MCF 10A (cell line): ENCODE measurements at regions of chr2 and their contacts with region 1.

Region 1: GRCh38 chr2:218852911-218853667 is 6.5 kb upstream of the WNT6 start:
- DNase-seq: peak; percentile 67
- H3K4me3 Mint-ChIP-seq: no peak overlapping the region
- H3K27ac Mint-ChIP-seq: no peak overlapping the region
- H3K4me1 Mint-ChIP-seq: peaks cover 23% of the 10 kb centered on the region
- H3K27me3 Mint-ChIP-seq: peaks cover 5% of the 10 kb centered on the region
- CTCF ChIP-seq: peak; percentile 89

Region 2: DNA sequence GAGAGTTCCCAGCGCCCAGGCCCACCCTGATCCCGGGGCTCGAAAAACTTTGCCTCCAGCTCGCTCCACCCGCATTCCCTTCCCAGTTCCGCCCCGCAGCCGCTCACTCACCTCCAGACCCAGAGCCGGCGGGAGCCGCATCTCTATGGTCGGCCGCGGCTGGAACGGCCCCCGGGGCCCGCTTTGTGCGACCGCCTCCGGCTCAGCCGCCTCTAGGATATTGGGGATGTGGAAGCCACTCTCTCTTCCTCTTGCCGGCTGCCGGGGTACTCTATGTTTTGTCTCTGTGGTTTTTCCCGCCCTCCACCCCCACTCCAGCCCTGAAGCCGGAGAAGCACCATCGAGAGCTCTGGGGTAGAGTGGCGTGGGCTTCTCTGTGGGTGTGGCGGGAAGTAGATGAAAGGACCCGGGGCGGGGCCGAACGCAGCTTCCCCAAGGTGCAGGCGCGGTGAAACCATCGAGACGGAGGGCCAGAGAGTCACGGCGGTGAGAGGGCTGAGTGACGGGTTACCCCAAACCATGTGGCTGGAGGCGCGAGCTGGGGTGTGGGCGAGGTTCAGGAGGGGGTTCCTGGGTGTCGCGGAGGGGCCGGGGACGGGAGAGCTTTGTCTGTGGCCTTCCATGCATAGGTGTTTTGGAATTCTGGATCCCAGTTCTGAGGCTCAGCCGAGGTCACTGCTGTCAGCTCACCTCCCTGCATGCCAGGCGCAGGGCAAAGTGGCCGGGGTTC is 193.7 kb before region 1 on chr2 and contains the starts of genes BCS1L and ZNF142:
- CTCF ChIA-PET with region 1: interaction called, 26 read pairs
- POLR2A ChIA-PET with region 1: no interaction called
- intact Hi-C with region 1: no loop called
- DNase-seq: peak; percentile 94
- H3K4me3 Mint-ChIP-seq: peak within 1 kb of the TSS; percentile 92
- H3K27ac Mint-ChIP-seq: peak within 1 kb of the TSS; percentile 82
- H3K4me1 Mint-ChIP-seq: peaks cover 27% of the 10 kb centered on the region
- H3K27me3 Mint-ChIP-seq: no peaks in the 10 kb centered on the region
- CTCF ChIP-seq: no peak
- total RNA-seq, gene BCS1L: 71.1 and 96.0 TPM in 2 replicates
- total RNA-seq, gene ZNF142: 33.7 and 37.8 TPM in 2 replicates

Region 3: GRCh38 chr2:218691234-218691633 is 161.9 kb before region 1 on chr2:
- CTCF ChIA-PET with region 1: interaction called, 19 read pairs
- POLR2A ChIA-PET with region 1: no interaction called
- intact Hi-C with region 1: no loop called
- DNase-seq: no peak
- H3K4me3 Mint-ChIP-seq: no peak overlapping the region
- H3K27ac Mint-ChIP-seq: no peak overlapping the region
- H3K4me1 Mint-ChIP-seq: peaks cover 6% of the 10 kb centered on the region
- H3K27me3 Mint-ChIP-seq: no peaks in the 10 kb centered on the region
- CTCF ChIP-seq: no peak

Region 4: DNA sequence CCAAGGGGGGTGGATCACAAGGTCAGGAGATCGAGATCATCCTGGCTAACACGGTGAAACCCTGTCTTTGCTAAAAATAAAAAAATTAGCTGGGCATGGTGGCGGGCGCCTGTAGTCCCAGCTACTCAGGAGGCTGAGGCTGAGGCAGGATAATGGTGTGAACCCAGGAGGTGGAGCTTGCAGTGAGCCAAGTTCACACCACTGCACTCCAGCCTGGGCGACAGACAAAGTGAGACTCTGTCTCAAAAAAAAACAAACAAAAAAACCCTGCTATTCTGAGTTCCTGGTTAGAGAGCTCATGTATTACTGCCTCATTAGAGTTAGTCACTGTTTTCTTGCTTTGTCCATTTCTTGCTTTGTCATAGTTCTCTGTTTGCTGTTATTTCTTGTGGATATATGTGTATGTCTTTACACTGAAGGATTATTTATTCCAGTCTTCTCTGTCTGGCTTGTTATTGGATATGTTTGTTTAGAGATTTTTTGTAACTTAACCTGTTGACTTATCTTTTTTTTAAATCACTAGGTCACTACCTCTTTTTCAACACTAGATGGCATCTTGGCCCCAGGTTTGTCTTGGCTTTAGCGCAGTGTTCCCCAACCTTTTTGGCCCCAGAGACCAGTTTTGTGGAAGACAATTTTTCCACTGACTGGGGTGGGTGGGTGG is 125.5 kb before region 1 on chr2:
- CTCF ChIA-PET with region 1: interaction called, 28 read pairs
- POLR2A ChIA-PET with region 1: interaction called, 7 read pairs
- intact Hi-C with region 1: no loop called
- DNase-seq: peak; percentile 40
- H3K4me3 Mint-ChIP-seq: no peak overlapping the region
- H3K27ac Mint-ChIP-seq: no peak overlapping the region
- H3K4me1 Mint-ChIP-seq: peaks cover 21% of the 10 kb centered on the region
- H3K27me3 Mint-ChIP-seq: no peaks in the 10 kb centered on the region
- CTCF ChIP-seq: peak; percentile 48

Region 5: DNA sequence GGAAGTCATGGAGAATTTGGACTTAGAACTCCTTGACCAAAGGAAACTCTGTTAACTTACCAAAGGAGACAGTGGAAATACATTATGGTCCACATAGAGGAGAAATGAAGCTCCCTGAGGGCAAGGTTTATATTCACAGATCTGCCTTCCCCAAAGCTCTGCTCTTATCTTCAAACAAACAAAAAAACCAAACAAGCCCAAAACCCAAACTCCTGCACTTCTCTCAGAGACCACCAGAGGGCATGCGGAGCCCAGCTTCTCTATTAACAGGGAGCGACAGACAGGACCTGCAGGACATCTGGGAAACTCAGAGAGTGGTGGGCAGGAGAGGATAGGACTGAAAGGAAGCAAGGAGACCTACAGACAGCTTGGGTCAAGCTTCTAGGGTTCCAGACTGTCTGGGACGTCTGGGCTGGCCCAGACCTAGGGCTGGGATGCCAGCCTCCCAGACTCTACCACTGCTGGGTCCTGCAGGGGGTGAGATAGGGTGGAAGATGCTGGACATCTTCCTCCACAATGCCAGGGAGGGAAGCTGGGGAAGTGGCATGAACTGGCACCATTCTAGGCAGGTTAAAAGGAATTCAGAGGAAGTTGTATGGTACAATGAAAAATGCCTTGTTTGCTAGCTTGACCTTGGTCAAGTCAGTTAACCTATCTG is 23.6 kb after region 1 on chr2:
- CTCF ChIA-PET with region 1: interaction called, 46 read pairs
- POLR2A ChIA-PET with region 1: no interaction called
- intact Hi-C with region 1: no loop called
- DNase-seq: peak; percentile 80
- H3K4me3 Mint-ChIP-seq: no peak overlapping the region
- H3K27ac Mint-ChIP-seq: no peak overlapping the region
- H3K4me1 Mint-ChIP-seq: peaks cover 4% of the 10 kb centered on the region
- H3K27me3 Mint-ChIP-seq: peaks cover 19% of the 10 kb centered on the region
- CTCF ChIP-seq: peak; percentile 96

Region 6: DNA sequence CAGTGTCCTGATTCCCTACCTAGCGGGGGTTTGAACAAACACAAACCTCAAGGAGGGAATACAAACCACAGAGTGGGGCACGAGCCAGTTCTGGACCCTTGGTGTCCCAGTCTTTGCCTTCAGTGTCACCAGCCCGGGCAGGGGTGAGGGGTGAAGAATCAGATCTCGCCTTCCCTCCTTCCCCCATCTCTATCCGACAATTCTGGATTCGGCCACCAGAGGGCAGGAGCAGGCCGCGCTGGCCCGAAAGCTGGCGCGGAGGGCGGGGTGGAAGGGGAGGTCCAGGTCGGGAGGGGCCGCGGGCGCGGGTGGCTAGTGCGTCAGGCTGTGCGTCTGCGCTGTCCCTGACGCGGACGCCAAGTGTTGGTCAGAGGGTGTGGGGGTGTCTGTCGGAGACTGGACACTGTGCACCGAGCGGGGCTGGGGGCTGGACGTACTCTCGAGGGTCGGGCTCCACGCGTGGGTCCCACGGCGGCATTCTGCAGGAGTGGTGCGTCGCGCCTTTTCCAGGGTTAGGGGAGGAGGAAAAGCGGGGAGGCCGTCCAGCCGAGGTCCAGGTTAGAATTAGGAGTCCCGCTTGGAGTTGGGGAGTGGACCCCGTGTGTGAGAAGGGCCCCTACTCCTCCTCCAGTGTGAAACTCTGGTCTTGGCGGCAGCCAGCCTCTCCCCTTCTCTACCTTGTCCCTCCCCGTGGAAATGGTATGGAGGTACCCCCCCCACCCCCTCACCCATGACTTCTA is 143.1 kb after region 1 on chr2:
- CTCF ChIA-PET with region 1: no interaction called
- POLR2A ChIA-PET with region 1: no interaction called
- intact Hi-C with region 1: loop called (anchors 5 kb)
- DNase-seq: peak; percentile 82
- H3K4me3 Mint-ChIP-seq: peak overlapping the region; percentile 73
- H3K27ac Mint-ChIP-seq: no peak overlapping the region
- H3K4me1 Mint-ChIP-seq: peaks cover 15% of the 10 kb centered on the region
- H3K27me3 Mint-ChIP-seq: peaks cover 22% of the 10 kb centered on the region
- CTCF ChIP-seq: peak; percentile 84